ENCODE measurements at regions of chr13 and their contacts with region 1.

Region 1: DNA sequence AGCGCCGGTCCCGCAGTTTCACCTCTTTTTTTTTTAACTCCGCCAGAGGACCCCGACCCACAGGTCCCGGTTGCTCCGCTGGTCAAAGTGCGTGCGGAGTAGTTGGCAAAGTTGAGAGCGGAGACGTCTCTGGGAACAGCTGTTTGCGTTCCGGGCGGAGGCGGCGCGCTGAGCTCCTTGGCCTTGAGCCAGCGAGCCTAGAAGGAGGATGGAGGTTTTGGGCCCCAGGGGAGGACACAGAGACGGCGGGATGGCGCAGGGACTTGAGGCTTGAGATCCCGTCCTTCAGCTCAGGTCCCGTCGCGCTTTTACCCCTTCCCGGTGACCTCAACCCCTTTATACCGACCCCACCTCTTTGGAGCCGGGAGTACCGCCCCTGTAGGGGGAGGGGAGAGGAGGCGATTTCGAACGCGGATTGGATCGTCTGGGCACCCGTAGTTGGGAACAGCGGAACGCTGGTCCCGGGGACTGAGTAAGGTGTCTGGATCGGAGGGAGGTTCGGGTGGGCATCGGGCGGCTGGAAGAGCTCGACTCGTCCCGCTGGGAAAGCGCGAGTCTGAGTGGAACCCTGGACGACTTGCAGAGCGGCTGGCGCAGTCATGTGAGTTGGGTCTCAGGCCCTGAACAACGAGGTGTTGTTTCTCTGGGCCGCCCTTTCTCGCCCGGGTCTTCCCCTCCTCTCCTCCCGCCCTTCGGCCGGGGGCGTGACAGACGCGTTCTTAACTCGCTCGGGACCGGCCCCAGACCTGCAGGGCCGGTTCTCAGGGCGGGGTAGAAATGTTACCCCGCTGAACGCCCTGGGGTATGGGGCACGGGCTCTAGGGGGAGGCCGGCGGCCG is at the start of gene WBP4:
- DNase-seq: peak; percentile 93
- ATAC-seq: peak; percentile 77
- H3K4me3 Mint-ChIP-seq: peak within 1 kb of the TSS; percentile 98
- H3K27ac Mint-ChIP-seq: peak within 1 kb of the TSS; percentile 100
- H3K4me1 Mint-ChIP-seq: peaks cover 57% of the 10 kb centered on the region
- H3K27me3 Mint-ChIP-seq: no peaks in the 10 kb centered on the region
- total RNA-seq, gene WBP4: 13.3 to 16.2 TPM

Region 2: GRCh38 chr13:40770934-40771618 is 290.2 kb before region 1 on chr13 and contains the start of gene MRPS31:
- CTCF ChIA-PET with region 1: interaction called, 3 read pairs
- POLR2A ChIA-PET with region 1: no interaction called
- intact Hi-C with region 1: loop called (anchors 1 kb)
- DNase-seq: peak; percentile 97
- ATAC-seq: peak; percentile 99
- H3K4me3 Mint-ChIP-seq: peak within 1 kb of the TSS; percentile 89
- H3K27ac Mint-ChIP-seq: peak within 1 kb of the TSS; percentile 97
- H3K4me1 Mint-ChIP-seq: peaks cover 30% of the 10 kb centered on the region
- H3K27me3 Mint-ChIP-seq: no peaks in the 10 kb centered on the region
- total RNA-seq, gene MRPS31: 45.8 to 46.1 TPM

Region 3: DNA sequence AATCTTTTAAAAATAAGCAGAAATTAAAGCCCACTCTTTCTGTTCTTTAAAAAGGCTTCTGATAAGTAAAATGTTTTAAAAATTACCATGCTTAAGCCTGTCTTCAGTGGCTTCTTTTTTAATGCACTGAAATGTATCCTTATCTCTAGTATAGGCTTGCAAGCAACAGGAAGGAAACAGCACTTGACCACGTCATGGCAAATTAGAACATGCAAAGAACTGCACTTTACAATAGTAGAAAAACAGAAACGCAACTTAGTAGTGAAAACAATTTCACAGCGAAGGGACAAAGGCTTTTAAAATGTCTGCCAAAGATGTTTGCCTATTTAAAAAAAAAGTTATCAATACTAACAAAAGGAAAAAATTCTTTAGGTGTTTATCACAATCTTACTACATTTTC is 78.5 kb before region 1 on chr13:
- CTCF ChIA-PET with region 1: no interaction called
- POLR2A ChIA-PET with region 1: interaction called, 3 read pairs
- intact Hi-C with region 1: loop called (anchors 1 to 2 kb)
- DNase-seq: peak; percentile 70
- ATAC-seq: peak; percentile 62
- H3K4me3 Mint-ChIP-seq: peak overlapping the region; percentile 91
- H3K27ac Mint-ChIP-seq: peak overlapping the region; percentile 92
- H3K4me1 Mint-ChIP-seq: peaks cover 66% of the 10 kb centered on the region
- H3K27me3 Mint-ChIP-seq: no peaks in the 10 kb centered on the region

Region 4: DNA sequence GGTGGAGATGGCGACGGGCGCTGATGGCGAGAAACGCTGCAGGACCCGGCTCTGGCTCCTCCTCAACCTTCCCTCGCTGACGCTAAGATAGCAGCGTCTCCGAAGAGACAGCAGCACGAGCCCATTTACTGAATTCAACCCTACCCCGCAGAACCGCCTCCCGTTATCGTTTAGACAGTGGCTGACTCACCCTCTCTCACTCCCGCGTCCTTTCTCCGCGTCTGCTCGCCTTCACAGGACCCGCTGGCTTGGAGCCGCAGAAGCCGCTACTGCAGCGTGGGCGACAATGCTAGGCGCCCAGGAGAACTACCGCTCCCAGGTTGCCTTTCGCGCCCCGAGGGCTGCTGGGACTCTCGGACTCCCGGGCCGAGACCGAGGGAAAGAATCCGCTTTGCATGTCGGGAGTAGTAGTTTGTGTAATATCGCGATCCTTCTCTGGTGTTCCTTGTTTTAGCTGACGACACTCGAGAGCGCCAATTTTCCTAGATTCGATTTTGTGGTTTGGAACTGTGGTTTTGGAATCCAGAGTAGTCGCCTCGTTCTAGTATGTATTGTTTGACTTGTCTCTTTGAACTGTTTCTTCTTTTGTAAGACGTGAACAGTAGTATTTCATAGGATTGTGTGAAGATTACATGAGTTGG is 71.3 kb after region 1 on chr13 and contains the start of gene KBTBD6:
- CTCF ChIA-PET with region 1: interaction called, 3 read pairs
- POLR2A ChIA-PET with region 1: no interaction called
- intact Hi-C with region 1: loop called (anchors 1 kb)
- DNase-seq: peak; percentile 98
- ATAC-seq: peak; percentile 95
- H3K4me3 Mint-ChIP-seq: peak within 1 kb of the TSS; percentile 92
- H3K27ac Mint-ChIP-seq: peak within 1 kb of the TSS; percentile 93
- H3K4me1 Mint-ChIP-seq: peaks cover 46% of the 10 kb centered on the region
- H3K27me3 Mint-ChIP-seq: no peaks in the 10 kb centered on the region
- total RNA-seq, gene KBTBD6: 3.4 to 4.4 TPM

Region 5: DNA sequence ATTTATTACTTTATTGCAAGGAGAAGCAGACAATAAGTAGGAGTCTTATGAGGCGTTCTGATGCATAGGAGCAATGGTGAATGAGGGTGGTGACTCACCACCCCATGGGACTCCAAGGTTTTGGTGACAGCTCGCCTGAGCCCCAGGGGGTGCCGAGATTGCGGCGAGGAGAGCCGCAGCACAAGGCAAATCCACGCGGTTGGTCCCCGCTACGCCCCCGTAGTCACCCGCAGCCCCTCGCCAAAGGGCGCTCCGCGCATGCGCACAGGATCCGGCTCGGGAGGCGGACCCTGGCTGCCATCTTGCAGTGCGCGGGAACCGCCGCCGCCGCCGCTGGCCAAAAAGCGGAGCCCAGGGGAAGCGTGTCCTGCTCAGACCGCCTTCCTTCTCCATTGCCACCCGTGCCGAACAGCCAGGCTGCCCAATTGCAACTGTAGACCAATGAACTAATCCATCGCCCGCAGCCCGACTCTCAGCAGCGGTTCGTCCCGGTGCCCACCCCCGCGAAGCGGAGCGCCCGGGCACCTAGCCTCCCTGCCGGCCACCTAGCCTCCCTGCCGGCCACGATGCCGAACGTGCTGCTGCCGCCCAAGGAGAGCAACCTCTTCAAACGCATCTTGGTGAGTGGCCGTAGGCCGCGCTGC is 249.8 kb after region 1 on chr13 and contains the start of gene NAA16:
- CTCF ChIA-PET with region 1: no interaction called
- POLR2A ChIA-PET with region 1: no interaction called
- intact Hi-C with region 1: loop called (anchors 1 to 5 kb)
- DNase-seq: peak; percentile 97
- ATAC-seq: peak; percentile 85
- H3K4me3 Mint-ChIP-seq: peak within 1 kb of the TSS; percentile 90
- H3K27ac Mint-ChIP-seq: peak within 1 kb of the TSS; percentile 96
- H3K4me1 Mint-ChIP-seq: peaks cover 39% of the 10 kb centered on the region
- H3K27me3 Mint-ChIP-seq: no peaks in the 10 kb centered on the region
- total RNA-seq, gene NAA16: 24.0 to 29.8 TPM

Region 6: GRCh38 chr13:42039946-42040729 is 978.8 kb after region 1 on chr13:
- CTCF ChIA-PET with region 1: no interaction called
- POLR2A ChIA-PET with region 1: no interaction called
- intact Hi-C with region 1: loop called in 1 of 2 experiments (anchors 10 kb)
- DNase-seq: peak; percentile 92
- ATAC-seq: peak; percentile 77
- H3K4me3 Mint-ChIP-seq: peak overlapping the region; percentile 74
- H3K27ac Mint-ChIP-seq: peak overlapping the region; percentile 76
- H3K4me1 Mint-ChIP-seq: peaks cover 23% of the 10 kb centered on the region
- H3K27me3 Mint-ChIP-seq: peaks cover 5% of the 10 kb centered on the region